BJ (cell line): ENCODE measurements at regions of chr17 and their contacts with region 1.

Region 1: DNA sequence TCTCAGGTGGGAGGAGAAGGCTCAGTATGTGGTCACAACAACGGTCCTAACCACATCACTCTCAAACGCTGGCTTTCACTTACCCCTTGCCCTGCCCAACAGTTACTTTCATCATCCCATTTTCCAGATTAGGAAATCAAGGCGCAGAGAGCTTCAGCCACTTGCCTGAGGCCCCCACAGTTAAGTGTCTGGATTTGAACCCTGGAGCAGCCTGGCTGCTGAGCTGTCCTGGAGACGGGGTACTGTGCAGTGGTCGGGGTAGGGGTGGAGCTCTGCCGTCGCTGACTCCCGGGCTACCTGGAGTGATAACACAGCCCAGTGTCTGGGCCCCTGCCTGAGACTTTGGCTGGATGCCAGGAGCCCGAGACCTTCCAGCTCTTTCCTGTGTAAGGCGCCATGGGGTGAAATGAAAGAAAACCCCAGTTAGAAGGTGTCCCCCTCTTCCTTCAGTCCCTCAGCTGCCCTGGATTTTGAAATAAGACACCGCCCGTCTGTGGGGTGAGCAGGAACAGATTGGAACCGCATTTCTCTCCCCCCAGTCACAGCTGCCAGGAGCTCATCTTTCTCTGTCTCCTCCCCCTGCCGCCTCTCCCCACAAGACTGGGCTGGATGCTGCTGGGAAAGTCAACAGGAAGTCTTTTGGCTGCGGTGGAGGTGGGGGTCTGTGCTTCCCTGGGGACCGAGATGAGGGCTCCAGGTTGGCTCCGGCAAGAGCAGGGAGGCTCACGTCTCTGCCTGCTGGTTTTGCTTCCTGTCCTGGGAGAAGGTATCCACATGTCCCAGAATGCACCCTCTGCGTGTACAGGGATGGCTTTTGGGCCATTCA is 280.2 kb downstream of the SEC14L1 start:
- DNase-seq: peak; percentile 58
- H3K4me3 ChIP-seq: 0 out of 2 replicates have a peak overlapping the region, but pooled peaks have one; percentile 12
- H3K27me3 ChIP-seq: no peaks in the 10 kb centered on the region
- CTCF ChIP-seq: no peak

Region 2: DNA sequence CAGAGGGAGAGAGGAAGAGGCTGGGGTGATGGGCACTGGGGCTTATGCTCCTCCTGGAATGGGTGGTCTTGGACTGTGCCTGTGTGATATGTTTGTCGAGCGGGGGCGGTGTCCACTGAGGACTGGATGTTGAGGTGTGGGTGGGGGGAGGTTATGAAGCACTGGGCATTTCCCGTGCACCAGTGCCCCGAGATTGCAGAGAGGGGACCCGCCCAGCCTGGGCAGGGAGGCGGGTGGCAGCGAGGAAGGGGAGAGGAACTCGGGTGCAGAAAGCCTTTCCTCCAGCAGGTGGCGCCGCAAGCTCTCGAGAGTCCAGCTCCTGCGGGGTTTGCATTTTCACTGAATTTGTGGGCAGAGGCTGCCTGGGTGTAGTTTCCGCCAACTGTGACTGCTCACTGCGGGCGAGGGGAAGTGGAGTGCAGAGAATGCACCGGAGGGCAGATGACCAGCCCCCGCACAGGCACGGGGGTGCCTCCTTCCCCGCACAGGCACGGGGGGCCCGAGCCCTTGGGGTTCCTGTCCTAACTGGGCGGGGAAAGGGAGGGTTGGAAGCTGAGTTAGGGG is 89.6 kb before region 1 on chr17:
- CTCF ChIA-PET with region 1: interaction called, 32 read pairs
- POLR2A ChIA-PET with region 1: no interaction called
- DNase-seq: no peak
- H3K4me3 ChIP-seq: no peak overlapping the region
- H3K27me3 ChIP-seq: no peaks in the 10 kb centered on the region
- CTCF ChIP-seq: peak; percentile 88

Region 3: DNA sequence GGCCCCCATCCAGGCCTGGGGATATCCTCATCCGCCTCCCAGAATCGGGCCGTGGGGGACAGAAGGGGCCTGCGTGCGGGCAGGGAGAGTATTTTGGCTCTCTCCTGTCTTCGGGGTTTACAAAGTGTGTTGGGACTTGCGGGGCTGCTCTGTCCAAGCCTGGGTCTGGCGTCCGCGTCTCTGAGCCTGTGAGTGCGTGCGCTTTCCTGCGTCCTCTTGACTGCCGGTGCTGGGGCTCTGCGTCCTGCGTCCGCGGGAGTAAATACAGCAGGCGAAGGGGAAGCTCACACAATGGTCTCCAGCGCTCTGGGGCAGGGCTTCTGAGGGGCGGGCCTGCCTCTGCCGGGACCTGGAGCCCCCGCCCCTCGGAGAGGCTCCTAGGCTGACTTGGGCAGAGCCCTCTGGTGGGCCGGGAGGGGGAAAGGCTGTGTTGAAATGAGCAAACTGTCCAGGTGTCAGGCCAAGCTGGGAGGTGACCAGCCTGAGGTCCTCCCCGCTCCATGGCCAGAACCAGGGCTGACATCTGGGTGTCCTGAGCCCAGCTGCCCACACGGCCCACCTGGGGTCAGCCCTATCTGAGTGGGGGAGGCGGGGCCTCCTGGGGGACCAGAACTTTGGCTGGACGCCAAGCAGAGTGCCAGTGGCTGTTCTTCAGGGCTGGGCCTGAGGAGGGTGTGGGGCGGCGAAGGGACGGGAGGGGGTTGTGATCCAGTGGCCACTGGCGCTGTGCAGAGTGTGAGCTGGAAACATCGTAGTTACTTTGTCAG is 46.7 kb before region 1 on chr17:
- CTCF ChIA-PET with region 1: interaction called, 10 read pairs
- POLR2A ChIA-PET with region 1: no interaction called
- DNase-seq: no peak
- H3K4me3 ChIP-seq: peak overlapping the region; percentile 78
- H3K27me3 ChIP-seq: no peaks in the 10 kb centered on the region
- CTCF ChIP-seq: peak; percentile 47

Region 4: GRCh38 chr17:77436058-77436442 is 15.0 kb after region 1 on chr17:
- CTCF ChIA-PET with region 1: no interaction called
- POLR2A ChIA-PET with region 1: interaction called, 21 read pairs
- DNase-seq: no peak
- H3K4me3 ChIP-seq: no peak overlapping the region
- H3K27me3 ChIP-seq: no peaks in the 10 kb centered on the region
- CTCF ChIP-seq: no peak

Region 5: GRCh38 chr17:77755410-77755963 is 334.5 kb after region 1 on chr17:
- CTCF ChIA-PET with region 1: no interaction called
- POLR2A ChIA-PET with region 1: no interaction called
- DNase-seq: no peak
- H3K4me3 ChIP-seq: no peak overlapping the region
- H3K27me3 ChIP-seq: no peaks in the 10 kb centered on the region; the same call in none of the 2 replicates
- CTCF ChIP-seq: no peak